ENCODE measurements at regions of chr6 and their contacts with region 1.

Region 1: GRCh38 chr6:52063584-52064344 is 23.6 kb downstream of the PKHD1 start:
- DNase-seq: peak; percentile 53 to 84
- H3K4me3 ChIP-seq: no peak overlapping the region
- H3K27ac ChIP-seq: no peak overlapping the region
- H3K4me1 ChIP-seq: peaks cover 0 to 7% (median 3%) of the 10 kb centered on the region in 4 donors
- H3K27me3 ChIP-seq: no peaks in the 10 kb centered on the region
- CTCF ChIP-seq: peak in 5 of 7 experiments; percentile 28 to 57 (median 47)
- EP300 ChIP-seq: no peak
- POLR2A ChIP-seq: no peak

Region 2: GRCh38 chr6:51844336-51844735 is 219.4 kb before region 1 on chr6:
- intact Hi-C with region 1: no loop called
- DNase-seq: no peak
- H3K4me3 ChIP-seq: no peak overlapping the region
- H3K27ac ChIP-seq: no peak overlapping the region
- H3K4me1 ChIP-seq: no peaks in the 10 kb centered on the region
- H3K27me3 ChIP-seq: no peaks in the 10 kb centered on the region
- CTCF ChIP-seq: peak in 1 of 7 experiments; percentile 8
- EP300 ChIP-seq: no peak
- POLR2A ChIP-seq: no peak

Region 3: DNA sequence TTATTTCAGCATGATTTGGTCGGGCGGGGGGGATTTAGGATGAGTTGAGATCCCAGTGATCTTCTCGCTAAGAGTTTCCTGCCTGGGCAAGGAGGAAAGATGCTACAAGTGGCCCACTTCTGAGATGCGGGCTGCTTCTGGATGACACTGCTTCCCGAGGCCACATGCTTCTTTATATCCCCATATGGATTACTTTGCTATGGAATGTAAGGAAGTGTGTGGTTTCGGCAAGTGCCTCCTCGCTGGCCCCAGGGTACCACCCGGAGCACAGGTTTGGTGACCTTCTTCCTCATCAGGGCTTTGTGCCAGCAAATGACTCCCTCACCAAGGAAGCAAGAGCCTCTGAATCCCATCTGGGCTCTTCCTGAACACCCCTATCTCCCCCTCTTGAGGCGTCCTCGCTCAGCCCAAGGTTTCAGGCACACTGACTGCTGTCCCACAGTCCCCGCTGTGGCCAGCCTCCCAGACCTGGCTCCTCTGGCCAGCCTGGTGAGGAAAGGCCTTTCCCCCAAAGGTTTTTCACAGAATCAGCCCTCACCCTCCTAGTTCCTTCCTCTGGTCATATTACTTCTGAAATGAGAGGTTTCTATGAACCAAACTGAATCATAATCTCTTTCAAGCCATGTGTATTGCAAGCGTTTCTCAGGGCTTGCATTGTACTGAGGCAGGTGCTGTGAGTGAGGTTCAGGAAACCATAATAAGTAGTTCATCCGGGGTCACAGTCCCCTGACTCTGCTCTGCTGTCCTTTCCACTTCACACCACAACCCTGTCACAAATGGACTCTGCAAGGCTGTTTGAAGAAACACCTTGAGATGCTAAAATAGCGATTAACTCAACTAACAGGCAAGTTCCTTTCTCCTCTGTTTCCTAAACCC is 80.7 kb after region 1 on chr6:
- intact Hi-C with region 1: no loop called
- DNase-seq: no peak
- H3K4me3 ChIP-seq: no peak overlapping the region
- H3K27ac ChIP-seq: no peak overlapping the region
- H3K4me1 ChIP-seq: peaks cover 0 to 12% (median 5%) of the 10 kb centered on the region in 4 donors
- H3K27me3 ChIP-seq: no peaks in the 10 kb centered on the region
- CTCF ChIP-seq: no peak
- EP300 ChIP-seq: no peak
- POLR2A ChIP-seq: no peak

Region 4: DNA sequence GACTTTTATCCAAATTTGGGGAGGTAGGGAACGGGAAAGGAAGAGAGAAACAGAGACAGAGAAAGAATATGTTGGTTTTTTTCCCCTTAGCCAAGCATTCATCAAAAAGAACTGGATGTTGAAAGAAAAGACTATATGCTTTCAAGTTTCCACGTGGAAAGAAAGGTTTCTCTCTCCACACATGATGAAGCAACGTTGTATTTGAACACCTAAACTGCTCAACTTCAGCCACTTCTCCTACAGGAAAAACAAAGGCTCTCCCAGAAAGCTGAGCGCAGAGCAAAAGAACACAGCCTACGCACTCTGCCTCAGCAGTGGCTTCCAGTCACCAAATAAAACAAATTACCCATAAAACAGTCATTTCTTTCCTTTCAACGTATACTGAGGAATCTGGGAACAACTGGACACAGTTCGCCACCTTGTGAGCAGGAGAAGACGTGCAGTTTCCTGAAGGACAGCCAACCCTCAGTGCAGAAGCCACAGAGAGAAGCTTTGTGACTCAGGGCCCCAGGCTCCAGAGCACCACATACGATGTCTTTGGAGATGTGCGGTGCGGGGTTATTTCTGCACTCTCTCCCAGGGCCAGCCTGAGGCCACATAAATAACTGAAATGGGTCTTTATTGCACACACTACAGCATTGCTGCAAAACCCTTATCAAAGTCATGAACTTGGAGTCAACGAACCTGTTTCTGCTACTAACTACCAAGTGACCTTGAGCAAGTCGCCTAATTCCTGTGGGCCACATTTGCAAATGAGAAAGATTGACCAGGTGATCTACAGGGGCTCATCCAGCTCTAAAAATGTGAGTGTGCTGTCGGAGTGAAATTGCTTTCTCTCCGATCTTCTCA is 170.4 kb after region 1 on chr6:
- intact Hi-C with region 1: loop called (anchors 10 kb)
- DNase-seq: peak; percentile 53 to 76
- H3K4me3 ChIP-seq: no peak overlapping the region
- H3K27ac ChIP-seq: no peak overlapping the region
- H3K4me1 ChIP-seq: no peaks in the 10 kb centered on the region
- H3K27me3 ChIP-seq: peaks cover 0 to 23% (median 0%) of the 10 kb centered on the region in 3 donors
- CTCF ChIP-seq: peak in 4 of 7 experiments; percentile 31 to 63 (median 40)
- EP300 ChIP-seq: no peak
- POLR2A ChIP-seq: no peak